Upper lobe of right lung (tissue), 1 donor: ENCODE measurements at regions of chr15 and their contacts with region 1.

Region 1: DNA sequence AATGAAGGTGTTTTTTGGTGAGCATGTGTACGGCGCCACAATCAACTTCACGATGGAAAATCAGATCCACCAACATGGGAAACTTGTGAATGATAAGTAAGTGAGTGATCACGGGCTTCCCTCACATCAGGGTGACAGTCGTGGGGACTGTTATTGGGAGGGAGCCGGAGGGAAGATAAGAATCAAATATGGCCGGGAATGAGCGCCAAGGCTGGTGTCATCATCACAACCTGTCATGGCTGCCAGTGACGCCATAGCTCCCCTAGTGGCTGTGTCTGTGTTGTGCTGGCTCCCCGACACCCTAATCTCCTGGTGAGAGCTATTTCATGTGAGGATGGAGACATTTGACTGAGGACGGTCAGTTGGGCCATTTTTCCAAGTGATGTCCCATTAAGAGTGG is 168.5 kb downstream of the SV2B start:
- DNase-seq: no peak
- ATAC-seq: no peak
- H3K4me3 ChIP-seq: no peak overlapping the region
- H3K27ac ChIP-seq: no peak overlapping the region
- H3K4me1 ChIP-seq: no peaks in the 10 kb centered on the region
- H3K27me3 ChIP-seq: no peaks in the 10 kb centered on the region
- CTCF ChIP-seq: peak; percentile 13

Region 2: GRCh38 chr15:91022075-91022835 is 246.3 kb before region 1 on chr15 and contains the start of gene VPS33B:
- intact Hi-C with region 1: no loop called
- DNase-seq: peak; percentile 88
- ATAC-seq: peak; percentile 96
- H3K4me3 ChIP-seq: peak within 1 kb of the TSS; percentile 98
- H3K27ac ChIP-seq: peak within 1 kb of the TSS; percentile 84
- H3K4me1 ChIP-seq: peaks cover 20% of the 10 kb centered on the region
- H3K27me3 ChIP-seq: no peaks in the 10 kb centered on the region
- CTCF ChIP-seq: no peak
- total RNA-seq, gene VPS33B: 14.3 TPM

Region 3: DNA sequence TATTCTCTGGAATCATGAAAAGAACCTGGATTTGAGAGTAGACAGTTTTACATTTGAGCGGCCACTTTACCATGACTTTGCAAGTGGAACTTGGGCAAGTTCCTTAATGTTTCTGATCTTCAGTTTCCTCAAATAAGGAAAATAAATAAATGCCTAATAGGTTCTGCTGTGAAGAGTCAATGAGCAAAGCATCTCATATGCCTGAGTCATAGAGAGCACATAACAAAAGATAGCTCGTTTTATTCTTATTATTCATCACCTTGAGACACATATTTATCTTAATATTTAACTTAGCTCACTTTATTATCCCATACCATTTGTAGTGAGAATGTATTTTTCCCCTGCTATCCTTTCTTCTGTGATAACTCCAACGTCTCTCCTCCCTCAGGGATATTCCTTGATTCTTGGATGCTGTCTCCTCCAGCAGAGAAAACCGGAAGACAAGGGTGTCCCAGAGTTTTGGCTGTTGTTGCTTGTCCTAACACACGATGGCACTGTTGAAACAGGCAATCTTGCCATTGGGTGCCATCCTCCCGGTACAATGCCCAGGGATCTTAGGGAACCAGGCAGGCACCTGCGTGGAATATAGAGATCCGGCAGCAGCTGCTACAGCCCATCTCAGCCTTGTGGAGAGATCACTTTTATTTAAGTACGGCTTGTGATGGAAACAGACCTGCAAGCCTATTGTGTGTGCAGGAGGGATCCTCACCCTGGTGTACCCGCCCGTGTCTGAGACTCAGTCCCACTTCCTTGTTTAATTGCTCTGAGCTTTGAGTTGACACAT is 212.8 kb before region 1 on chr15:
- intact Hi-C with region 1: loop called (anchors 5 kb)
- DNase-seq: no peak
- ATAC-seq: peak; percentile 96
- H3K4me3 ChIP-seq: no peak overlapping the region
- H3K27ac ChIP-seq: no peak overlapping the region
- H3K4me1 ChIP-seq: no peaks in the 10 kb centered on the region
- H3K27me3 ChIP-seq: peaks cover 39% of the 10 kb centered on the region
- CTCF ChIP-seq: peak; percentile 74

Region 4: DNA sequence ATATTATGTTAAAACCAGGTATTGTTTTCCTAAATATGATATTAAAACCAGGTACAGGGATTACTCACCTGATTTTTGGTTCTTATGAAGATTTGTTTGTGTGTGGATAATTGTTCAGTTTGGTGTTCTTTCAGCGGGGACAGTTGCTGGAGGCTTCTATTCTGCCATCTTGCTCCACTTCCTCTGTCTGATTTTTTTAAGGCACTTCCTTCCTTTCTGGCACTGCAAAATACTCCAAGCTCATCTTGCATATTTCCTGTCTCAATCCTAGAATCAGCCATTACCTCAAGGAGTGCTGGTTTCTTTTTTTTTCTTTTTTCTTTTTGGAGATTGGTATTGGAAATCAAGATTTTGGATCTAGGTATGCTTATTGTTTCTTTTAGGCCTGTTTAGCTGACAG is 61.4 kb after region 1 on chr15:
- intact Hi-C with region 1: no loop called
- DNase-seq: no peak
- ATAC-seq: no peak
- H3K4me3 ChIP-seq: no peak overlapping the region
- H3K27ac ChIP-seq: no peak overlapping the region
- H3K4me1 ChIP-seq: no peaks in the 10 kb centered on the region
- H3K27me3 ChIP-seq: no peaks in the 10 kb centered on the region
- CTCF ChIP-seq: no peak

Region 5: DNA sequence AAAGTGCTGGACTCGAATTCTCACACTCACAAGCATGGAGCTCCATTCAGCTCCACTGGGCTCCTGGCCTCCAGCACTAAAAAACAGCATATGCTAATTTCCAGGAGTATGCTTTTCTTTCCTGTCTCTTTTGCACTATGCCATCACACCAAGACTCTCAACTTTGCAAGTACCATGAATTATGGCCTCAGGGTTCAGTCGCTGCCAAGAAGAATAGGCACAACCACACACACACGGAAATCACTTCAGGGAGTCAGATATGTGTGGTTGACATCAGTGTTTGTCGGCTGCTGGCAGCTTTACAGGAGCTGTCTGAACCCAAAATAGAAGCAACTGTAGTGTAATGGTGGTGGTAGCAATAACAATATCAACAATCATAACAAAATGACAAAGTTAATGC is 280.0 kb after region 1 on chr15:
- intact Hi-C with region 1: no loop called
- DNase-seq: no peak
- ATAC-seq: no peak
- H3K4me3 ChIP-seq: no peak overlapping the region
- H3K27ac ChIP-seq: no peak overlapping the region
- H3K4me1 ChIP-seq: no peaks in the 10 kb centered on the region
- H3K27me3 ChIP-seq: no peaks in the 10 kb centered on the region
- CTCF ChIP-seq: no peak